ENCODE measurements at regions of chr10 and their contacts with region 1.

Region 1: GRCh38 chr10:28628184-28628893 is 49.0 kb upstream of the BAMBI start:
- DNase-seq: peak; percentile 40
- H3K4me3 Mint-ChIP-seq: no peak overlapping the region
- H3K27ac Mint-ChIP-seq: no peak overlapping the region
- H3K4me1 Mint-ChIP-seq: peaks cover 4% of the 10 kb centered on the region
- H3K27me3 Mint-ChIP-seq: peaks cover 5% of the 10 kb centered on the region

Region 2: GRCh38 chr10:28710202-28710886 is 82.0 kb after region 1 on chr10:
- intact Hi-C with region 1: no loop called
- DNase-seq: no peak
- H3K4me3 Mint-ChIP-seq: no peak overlapping the region
- H3K27ac Mint-ChIP-seq: no peak overlapping the region
- H3K4me1 Mint-ChIP-seq: no peaks in the 10 kb centered on the region
- H3K27me3 Mint-ChIP-seq: no peaks in the 10 kb centered on the region

Region 3: DNA sequence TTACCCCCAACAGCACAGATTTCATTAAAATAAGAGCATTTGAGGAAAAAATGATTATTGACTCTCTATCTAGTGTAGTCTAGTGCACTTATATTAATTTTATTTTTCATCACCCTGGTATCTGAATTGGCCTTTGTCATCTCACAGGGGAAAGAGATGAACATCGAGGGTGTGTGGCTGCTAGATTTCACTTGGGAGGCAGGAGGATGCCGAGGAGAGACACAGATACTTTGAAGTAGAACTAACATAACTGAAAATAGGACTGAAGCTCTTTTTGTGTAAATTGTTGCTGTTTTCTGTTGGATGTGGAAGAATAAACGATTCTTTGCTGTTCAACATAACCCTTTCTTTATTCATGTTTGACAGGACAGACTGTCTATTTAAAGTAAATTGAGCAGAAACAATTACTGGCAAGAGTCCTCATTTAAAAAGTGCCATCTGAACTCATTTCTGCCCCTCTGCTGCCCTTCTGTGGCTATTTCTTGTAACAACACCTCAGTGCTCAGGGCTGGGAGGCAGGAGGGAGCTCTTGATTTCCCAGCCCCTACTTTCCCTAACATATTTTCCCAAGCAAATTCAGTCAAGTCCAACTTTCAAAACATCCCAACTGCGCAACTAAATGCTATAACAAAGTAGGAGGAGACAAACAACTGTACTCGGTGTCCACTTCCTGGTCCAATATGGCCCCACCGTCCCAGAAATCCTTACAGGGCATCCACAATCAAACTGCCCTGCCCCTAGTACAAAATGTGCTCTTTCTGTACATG is 676.1 kb after region 1 on chr10:
- intact Hi-C with region 1: loop called (anchors 1 kb)
- DNase-seq: no peak
- H3K4me3 Mint-ChIP-seq: no peak overlapping the region
- H3K27ac Mint-ChIP-seq: no peak overlapping the region
- H3K4me1 Mint-ChIP-seq: no peaks in the 10 kb centered on the region
- H3K27me3 Mint-ChIP-seq: peaks cover 10% of the 10 kb centered on the region